HEK293 (cell line): ENCODE measurements at regions of chr11 and their contacts with region 1.

Region 1: GRCh38 chr11:9534791-9535781 is 38.4 kb upstream of the WEE1 start:
- H3K4me3 ChIP-seq: no peak overlapping the region
- H3K27ac ChIP-seq: no peak overlapping the region
- H3K4me1 ChIP-seq: no peaks in the 10 kb centered on the region
- CTCF ChIP-seq: peak; percentile 47; the same call in 1 of the 2 replicates

Region 2: GRCh38 chr11:9367551-9367950 is 167.5 kb before region 1 on chr11:
- CTCF ChIA-PET with region 1: no interaction called
- POLR2A ChIA-PET with region 1: no interaction called
- H3K4me3 ChIP-seq: no peak overlapping the region
- H3K27ac ChIP-seq: no peak overlapping the region
- H3K4me1 ChIP-seq: no peaks in the 10 kb centered on the region
- CTCF ChIP-seq: no peak

Region 3: DNA sequence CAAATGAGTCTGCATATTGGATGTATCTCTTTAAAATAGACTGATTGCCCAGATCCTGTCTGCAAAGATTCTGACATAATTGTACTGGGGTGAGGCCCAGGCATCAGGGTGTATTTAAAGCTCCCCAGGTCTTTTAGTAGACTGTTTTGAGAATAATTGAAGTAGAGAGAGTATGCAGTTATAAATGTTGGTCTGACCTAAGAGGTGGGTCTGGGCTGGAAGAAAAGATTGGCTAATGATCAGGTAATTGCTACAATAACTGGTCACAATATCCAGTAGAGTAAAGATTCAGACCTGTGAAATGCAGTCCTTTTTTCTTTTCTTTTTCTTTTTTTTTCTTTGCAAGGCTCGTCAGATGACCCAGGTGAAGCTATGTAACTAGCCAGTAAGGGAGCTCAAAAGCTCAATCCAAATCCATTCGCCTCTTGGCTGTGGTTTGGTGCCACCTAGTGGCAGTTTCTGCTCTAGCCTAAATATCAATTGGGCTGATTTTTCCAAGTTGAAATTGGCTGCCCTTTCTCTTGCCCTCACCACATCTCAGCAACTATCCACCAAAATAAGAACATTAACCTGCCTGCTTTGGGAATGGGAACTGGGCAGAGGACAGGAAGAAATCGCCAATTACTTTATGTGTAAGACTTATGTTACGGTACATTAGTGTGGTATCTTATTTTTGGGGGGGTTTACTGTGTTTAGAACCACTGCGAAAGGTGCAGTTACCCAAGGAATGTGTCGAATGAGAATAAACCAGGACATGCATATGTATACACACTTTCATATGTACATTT is 28.4 kb before region 1 on chr11:
- CTCF ChIA-PET with region 1: interaction called, 15 read pairs
- POLR2A ChIA-PET with region 1: no interaction called
- H3K4me3 ChIP-seq: no peak overlapping the region
- H3K27ac ChIP-seq: no peak overlapping the region
- H3K4me1 ChIP-seq: no peaks in the 10 kb centered on the region
- CTCF ChIP-seq: peak; percentile 48; the same call in 1 of the 2 replicates

Region 4: DNA sequence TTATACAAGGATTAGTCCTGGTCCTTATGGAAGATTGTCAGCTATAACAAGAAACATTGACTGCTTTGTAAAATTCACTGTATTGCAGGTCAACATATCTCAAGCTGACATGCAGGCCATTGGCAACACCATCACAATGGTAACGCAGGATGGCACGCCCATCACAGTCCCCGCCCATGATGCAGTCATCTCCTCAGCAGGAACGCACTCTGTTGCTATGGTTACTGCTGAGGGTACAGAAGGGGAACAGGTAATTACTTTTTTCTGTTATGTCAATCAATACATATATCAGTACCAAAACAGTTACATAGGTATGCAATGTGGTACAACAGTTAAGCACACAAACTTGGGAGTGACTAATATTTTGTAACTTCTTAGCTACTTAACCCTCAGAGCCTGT is 19.0 kb before region 1 on chr11:
- CTCF ChIA-PET with region 1: interaction called, 10 read pairs
- POLR2A ChIA-PET with region 1: no interaction called
- H3K4me3 ChIP-seq: no peak overlapping the region
- H3K27ac ChIP-seq: no peak overlapping the region
- H3K4me1 ChIP-seq: no peaks in the 10 kb centered on the region
- CTCF ChIP-seq: no peak

Region 5: GRCh38 chr11:9550191-9550628 is 15.1 kb after region 1 on chr11:
- CTCF ChIA-PET with region 1: interaction called, 30 read pairs
- POLR2A ChIA-PET with region 1: no interaction called
- H3K4me3 ChIP-seq: no peak overlapping the region
- H3K27ac ChIP-seq: no peak overlapping the region
- H3K4me1 ChIP-seq: no peaks in the 10 kb centered on the region
- CTCF ChIP-seq: no peak

Region 6: GRCh38 chr11:9565822-9566560 is 30.9 kb after region 1 on chr11:
- CTCF ChIA-PET with region 1: interaction called, 20 read pairs
- POLR2A ChIA-PET with region 1: no interaction called
- H3K4me3 ChIP-seq: no peak overlapping the region
- H3K27ac ChIP-seq: peak overlapping the region; percentile 66
- H3K4me1 ChIP-seq: peaks cover 6% of the 10 kb centered on the region; the same call in 1 of the 2 replicates
- CTCF ChIP-seq: no peak

Region 7: GRCh38 chr11:9573052-9573774 is 38.1 kb after region 1 on chr11 and contains the start of gene WEE1:
- CTCF ChIA-PET with region 1: interaction called, 20 read pairs
- POLR2A ChIA-PET with region 1: interaction called, 18 read pairs
- H3K4me3 ChIP-seq: peak within 1 kb of the TSS; percentile 100
- H3K27ac ChIP-seq: peak within 1 kb of the TSS; percentile 98
- H3K4me1 ChIP-seq: no peaks in the 10 kb centered on the region
- CTCF ChIP-seq: 0 out of 2 replicates have a peak, but pooled peaks have one; percentile 11